ENCODE measurements at regions of chr20 and their contacts with region 1.

Region 1: DNA sequence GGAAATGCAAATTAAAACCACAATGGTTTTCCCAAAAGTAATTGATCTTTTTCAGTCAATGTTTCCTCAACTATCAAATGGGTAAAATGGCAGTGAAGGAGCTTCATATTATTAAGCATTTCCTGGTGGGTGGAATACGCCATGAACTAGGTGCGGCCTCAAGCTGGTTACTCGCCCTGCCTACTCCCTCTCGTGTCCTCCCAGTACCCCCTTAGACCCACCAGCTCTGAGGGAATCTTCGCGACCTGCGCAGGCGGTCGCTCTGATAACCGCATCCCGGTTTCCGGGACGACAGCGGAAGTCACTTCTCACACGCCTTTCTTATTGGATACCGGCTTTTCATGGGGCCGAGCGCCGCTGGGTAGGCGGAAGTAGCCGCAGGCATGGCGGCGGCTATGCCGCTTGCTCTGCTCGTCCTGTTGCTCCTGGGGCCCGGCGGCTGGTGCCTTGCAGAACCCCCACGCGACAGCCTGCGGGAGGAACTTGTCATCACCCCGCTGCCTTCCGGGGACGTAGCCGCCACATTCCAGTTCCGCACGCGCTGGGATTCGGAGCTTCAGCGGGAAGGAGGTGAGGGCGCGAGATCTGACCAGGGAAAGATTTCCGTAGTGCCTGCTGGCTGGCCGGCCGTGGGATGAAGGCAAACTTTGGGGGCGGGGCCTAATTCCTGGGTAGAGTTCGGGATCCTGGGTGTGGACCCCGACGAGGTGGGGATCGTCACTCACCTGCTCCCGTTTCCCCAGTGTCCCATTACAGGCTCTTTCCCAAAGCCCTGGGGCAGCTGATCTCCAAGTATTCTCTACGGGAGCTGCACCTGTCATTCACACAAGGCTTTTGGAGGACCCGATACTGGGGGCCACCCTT is at the start of gene PIGT:
- DNase-seq: peak; percentile 93
- ATAC-seq: peak; percentile 99
- H3K4me3 ChIP-seq: peak within 1 kb of the TSS; percentile 84 to 97 (median 86)
- H3K27ac ChIP-seq: peak within 1 kb of the TSS; percentile 62
- H3K4me1 ChIP-seq: peaks cover 31% of the 10 kb centered on the region
- H3K27me3 ChIP-seq: no peaks in the 10 kb centered on the region; a peak in 1 of 5 replicates
- CTCF ChIP-seq: peak; percentile 38; the same call in 1 of the 2 replicates
- EP300 ChIP-seq: peak; percentile 40 to 46; a peak in 2 of 4 replicates
- POLR2A ChIP-seq: peak; percentile 93 to 98
- RAD21 ChIP-seq: peak; percentile 82
- total RNA-seq, gene PIGT: 26.4 and 65.9 TPM in 2 replicates

Region 2: DNA sequence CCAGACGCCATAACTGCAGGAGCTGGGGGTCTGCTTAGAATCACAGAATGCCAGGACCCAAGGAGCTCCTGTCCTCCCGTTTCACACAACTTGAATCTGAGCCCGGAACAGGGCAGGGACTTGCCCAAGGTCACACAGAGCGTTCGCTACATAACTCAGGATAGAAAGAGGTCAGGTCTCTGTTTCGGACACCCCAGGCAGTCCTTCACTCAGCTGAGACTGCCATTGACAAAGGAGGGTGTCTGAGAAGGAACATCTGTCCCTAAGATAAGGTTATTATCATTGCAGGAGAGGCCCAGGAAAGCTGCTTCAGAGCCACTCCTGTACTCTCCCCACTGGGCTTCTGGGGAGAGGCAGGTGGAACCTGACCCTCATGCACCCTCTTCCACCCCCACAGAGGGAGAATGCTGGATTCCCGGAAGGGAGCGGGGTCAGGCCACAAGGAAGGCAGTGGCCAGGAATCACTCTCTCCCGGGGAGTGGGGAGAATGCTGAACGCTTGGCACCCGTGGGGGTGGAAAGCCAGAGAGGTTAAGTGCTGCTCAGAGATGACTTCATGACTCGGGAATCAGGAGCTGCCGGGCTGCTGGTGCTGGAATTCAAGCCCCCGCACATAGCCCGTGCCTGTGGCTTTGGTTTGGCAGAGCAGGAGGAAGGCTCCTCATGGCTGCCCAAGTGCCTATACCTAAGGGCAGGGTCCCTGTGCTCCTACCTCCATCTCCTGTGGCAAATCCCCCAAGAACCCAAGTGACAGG is 78.5 kb before region 1 on chr20:
- CTCF ChIA-PET with region 1: no interaction called
- POLR2A ChIA-PET with region 1: interaction called, 52 read pairs
- in situ Hi-C with region 1: no loop called
- intact Hi-C with region 1: loop called (anchors 5 kb)
- DNase-seq: peak; percentile 65
- ATAC-seq: peak; percentile 32
- H3K4me3 ChIP-seq: peak overlapping the region; percentile 31 to 57 (median 32)
- H3K27ac ChIP-seq: peak overlapping the region; percentile 80
- H3K4me1 ChIP-seq: peaks cover 67% of the 10 kb centered on the region
- H3K27me3 ChIP-seq: no peaks in the 10 kb centered on the region
- CTCF ChIP-seq: no peak
- EP300 ChIP-seq: no peak
- POLR2A ChIP-seq: peak in 1 of 2 experiments; percentile 39; a peak in 1 of 4 replicates
- RAD21 ChIP-seq: no peak

Region 3: DNA sequence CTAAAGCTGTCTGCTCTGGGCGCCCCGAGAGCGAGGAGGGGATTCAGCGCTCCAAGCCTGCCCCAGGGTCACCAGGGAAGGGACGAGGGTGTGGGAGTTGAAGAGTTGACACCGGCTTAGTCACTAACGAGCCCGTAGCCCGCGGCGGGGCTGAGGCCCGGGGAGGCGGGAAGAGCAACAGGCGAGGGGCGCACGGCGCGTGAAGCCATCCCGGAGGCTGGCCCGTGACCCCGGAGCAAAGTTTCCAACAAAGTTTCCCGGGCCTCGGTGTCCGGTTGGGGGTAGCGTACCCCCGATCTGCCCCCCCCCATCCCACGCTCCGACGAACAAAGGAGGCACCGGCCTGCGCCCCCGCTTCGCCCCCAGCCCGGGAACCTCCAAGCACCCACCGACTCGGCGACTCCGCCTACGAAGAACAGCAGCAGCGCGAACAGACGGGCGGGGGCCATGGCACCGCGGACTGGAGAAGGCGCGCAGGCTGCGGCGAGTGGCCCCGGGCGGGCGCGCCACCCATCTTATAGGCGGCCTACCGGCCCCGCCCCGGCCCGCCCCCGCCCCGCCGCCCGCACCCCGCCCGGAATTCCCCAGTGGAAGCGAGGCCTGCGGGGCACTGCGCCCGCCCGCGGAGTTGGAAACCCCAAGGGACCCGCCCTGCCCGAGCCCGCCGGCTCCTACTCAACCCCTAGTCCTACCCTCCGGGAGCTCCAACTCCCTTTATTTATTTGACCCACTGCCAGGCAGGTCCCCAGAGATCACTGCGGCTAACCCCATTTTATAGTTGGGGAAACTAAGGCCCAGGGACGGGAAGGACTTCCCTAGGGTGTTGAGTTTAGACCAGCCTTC is 67.8 kb before region 1 on chr20 and contains the start of gene SDC4:
- CTCF ChIA-PET with region 1: no interaction called
- POLR2A ChIA-PET with region 1: interaction called, 52 read pairs
- in situ Hi-C with region 1: no loop called
- intact Hi-C with region 1: loop called (anchors 5 kb)
- DNase-seq: no peak
- ATAC-seq: peak; percentile 55
- H3K4me3 ChIP-seq: peak within 1 kb of the TSS; percentile 79 to 87 (median 87)
- H3K27ac ChIP-seq: peak within 1 kb of the TSS; percentile 53
- H3K4me1 ChIP-seq: peaks cover 69% of the 10 kb centered on the region
- H3K27me3 ChIP-seq: peaks cover 1 to 11% of the 10 kb centered on the region in 2 experiments; a peak in 2 of 5 replicates
- CTCF ChIP-seq: no peak
- EP300 ChIP-seq: no peak
- POLR2A ChIP-seq: peak; percentile 96 to 99
- RAD21 ChIP-seq: peak; percentile 44; the same call in 1 of the 2 replicates
- total RNA-seq, gene SDC4: 36.0 and 65.1 TPM in 2 replicates

Region 4: GRCh38 chr20:45362804-45363610 is 53.0 kb before region 1 on chr20 and contains the start of gene SYS1:
- CTCF ChIA-PET with region 1: no interaction called
- POLR2A ChIA-PET with region 1: interaction called, 45 read pairs
- in situ Hi-C with region 1: no loop called
- intact Hi-C with region 1: loop called (anchors 5 kb)
- DNase-seq: peak; percentile 100
- ATAC-seq: peak; percentile 89
- H3K4me3 ChIP-seq: peak within 1 kb of the TSS; percentile 78 to 95 (median 91)
- H3K27ac ChIP-seq: peak within 1 kb of the TSS; percentile 92
- H3K4me1 ChIP-seq: peaks cover 64% of the 10 kb centered on the region
- H3K27me3 ChIP-seq: no peaks in the 10 kb centered on the region; a peak in 2 of 5 replicates
- CTCF ChIP-seq: peak; percentile 99
- EP300 ChIP-seq: peak; percentile 8 to 29; a peak in 3 of 4 replicates
- POLR2A ChIP-seq: peak; percentile 94 to 98
- RAD21 ChIP-seq: peak; percentile 89
- total RNA-seq, gene SYS1: 22.0 and 38.3 TPM in 2 replicates

Region 5: GRCh38 chr20:45368221-45368980 is 47.6 kb before region 1 on chr20:
- CTCF ChIA-PET with region 1: no interaction called
- POLR2A ChIA-PET with region 1: interaction called, 45 read pairs
- in situ Hi-C with region 1: no loop called
- intact Hi-C with region 1: loop called (anchors 5 kb)
- DNase-seq: no peak
- ATAC-seq: no peak
- H3K4me3 ChIP-seq: no peak overlapping the region
- H3K27ac ChIP-seq: no peak overlapping the region
- H3K4me1 ChIP-seq: peaks cover 31% of the 10 kb centered on the region
- H3K27me3 ChIP-seq: no peaks in the 10 kb centered on the region; a peak in 1 of 5 replicates
- CTCF ChIP-seq: no peak
- EP300 ChIP-seq: no peak
- POLR2A ChIP-seq: peak in 1 of 2 experiments; percentile 33; a peak in 1 of 4 replicates
- RAD21 ChIP-seq: no peak

Region 6: GRCh38 chr20:45373353-45374100 is 42.5 kb before region 1 on chr20:
- CTCF ChIA-PET with region 1: no interaction called
- POLR2A ChIA-PET with region 1: interaction called, 15 read pairs
- in situ Hi-C with region 1: no loop called
- intact Hi-C with region 1: loop called (anchors 2 kb)
- DNase-seq: peak; percentile 83
- ATAC-seq: peak; percentile 91
- H3K4me3 ChIP-seq: peak overlapping the region in 2 of 3 experiments; percentile 12 to 29; a peak in 2 of 6 replicates
- H3K27ac ChIP-seq: no peak overlapping the region
- H3K4me1 ChIP-seq: peaks cover 19% of the 10 kb centered on the region
- H3K27me3 ChIP-seq: no peaks in the 10 kb centered on the region
- CTCF ChIP-seq: peak; percentile 98
- EP300 ChIP-seq: no peak
- POLR2A ChIP-seq: no peak
- RAD21 ChIP-seq: peak; percentile 92

Region 7: GRCh38 chr20:45427236-45428149 is 11.5 kb after region 1 on chr20:
- CTCF ChIA-PET with region 1: no interaction called
- POLR2A ChIA-PET with region 1: interaction called, 15 read pairs
- in situ Hi-C with region 1: no loop called
- intact Hi-C with region 1: no loop called
- DNase-seq: no peak
- ATAC-seq: peak; percentile 33
- H3K4me3 ChIP-seq: no peak overlapping the region
- H3K27ac ChIP-seq: no peak overlapping the region
- H3K4me1 ChIP-seq: 0 out of 2 replicates have a peak, but pooled peaks cover 5% of the 10 kb centered on the region
- H3K27me3 ChIP-seq: no peaks in the 10 kb centered on the region
- CTCF ChIP-seq: no peak
- EP300 ChIP-seq: no peak
- POLR2A ChIP-seq: no peak
- RAD21 ChIP-seq: no peak

Measured in HepG2 (cell line).